Sigmoid colon (tissue), 7 donors: ENCODE measurements at regions of chr1 and their contacts with region 1.

Region 1: GRCh38 chr1:112619520-112620376 is at the start of gene CAPZA1:
- DNase-seq: peak; percentile 96
- H3K4me3 ChIP-seq: peak within 1 kb of the TSS; percentile 63 to 97 (median 90)
- H3K27ac ChIP-seq: peak within 1 kb of the TSS; percentile 94 to 99 (median 96)
- H3K4me1 ChIP-seq: peaks cover 0 to 42% (median 36%) of the 10 kb centered on the region in 4 donors
- H3K27me3 ChIP-seq: no peaks in the 10 kb centered on the region
- CTCF ChIP-seq: no peak
- EP300 ChIP-seq: peak in 3 of 4 donors; percentile 1 to 47 (median 8)
- POLR2A ChIP-seq: peak; percentile 86 to 88
- total RNA-seq, gene CAPZA1: 75.9 to 90.6 (median 81.3) TPM

Region 2: GRCh38 chr1:112674439-112674985 is 54.8 kb after region 1 on chr1 and contains the start of gene MOV10:
- intact Hi-C with region 1: loop called (anchors 2 kb)
- DNase-seq: peak; percentile 89
- H3K4me3 ChIP-seq: peak within 1 kb of the TSS; percentile 67 to 96 (median 85)
- H3K27ac ChIP-seq: peak within 1 kb of the TSS; percentile 87 to 96 (median 90)
- H3K4me1 ChIP-seq: peaks cover 0 to 24% (median 21%) of the 10 kb centered on the region in 4 donors
- H3K27me3 ChIP-seq: no peaks in the 10 kb centered on the region
- CTCF ChIP-seq: no peak
- EP300 ChIP-seq: no peak
- POLR2A ChIP-seq: no peak
- total RNA-seq, gene MOV10: 16.5 to 43.8 (median 22.3) TPM

Region 3: DNA sequence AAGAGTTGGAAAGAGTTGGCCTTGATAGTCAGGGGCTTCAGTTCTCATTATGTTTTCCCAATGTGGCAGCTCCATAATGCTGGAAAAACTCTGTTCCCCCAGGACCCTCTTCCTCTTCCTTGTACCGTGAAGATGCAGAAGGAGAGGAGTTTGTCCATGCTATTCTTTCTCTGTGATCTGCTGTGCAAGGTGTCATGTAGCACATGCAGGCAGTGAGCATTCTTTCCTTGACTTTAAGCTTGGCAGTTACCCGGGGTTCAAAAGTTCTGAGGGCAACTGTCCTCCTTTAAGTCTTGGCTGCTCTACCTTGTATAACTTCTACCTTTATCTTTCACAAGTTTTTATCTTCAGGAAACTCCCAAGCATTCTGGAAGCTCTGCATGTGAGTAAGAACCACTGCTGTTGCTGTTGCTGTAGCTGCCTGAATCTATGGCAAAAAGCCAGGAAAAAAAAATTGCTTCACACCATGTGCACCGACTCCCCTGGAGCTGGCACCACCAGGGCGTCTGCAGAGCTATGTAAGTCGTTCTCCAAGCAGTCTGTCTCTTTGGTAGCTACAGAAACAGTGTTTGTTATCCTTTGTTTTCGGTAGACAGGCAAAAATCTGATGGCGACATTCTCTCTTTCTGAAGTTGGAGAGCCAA is 379.0 kb after region 1 on chr1:
- intact Hi-C with region 1: no loop called
- DNase-seq: peak; percentile 91
- H3K4me3 ChIP-seq: peak overlapping the region in 2 of 4 donors; percentile 0 to 10
- H3K27ac ChIP-seq: peak overlapping the region; percentile 75 to 85 (median 85)
- H3K4me1 ChIP-seq: peaks cover 0 to 65% (median 48%) of the 10 kb centered on the region in 4 donors
- H3K27me3 ChIP-seq: no peaks in the 10 kb centered on the region
- CTCF ChIP-seq: no peak
- EP300 ChIP-seq: no peak
- POLR2A ChIP-seq: no peak